CD4-positive, alpha-beta T cell (primary cell): ENCODE measurements at regions of chr11 and their contacts with region 1.

Region 1: DNA sequence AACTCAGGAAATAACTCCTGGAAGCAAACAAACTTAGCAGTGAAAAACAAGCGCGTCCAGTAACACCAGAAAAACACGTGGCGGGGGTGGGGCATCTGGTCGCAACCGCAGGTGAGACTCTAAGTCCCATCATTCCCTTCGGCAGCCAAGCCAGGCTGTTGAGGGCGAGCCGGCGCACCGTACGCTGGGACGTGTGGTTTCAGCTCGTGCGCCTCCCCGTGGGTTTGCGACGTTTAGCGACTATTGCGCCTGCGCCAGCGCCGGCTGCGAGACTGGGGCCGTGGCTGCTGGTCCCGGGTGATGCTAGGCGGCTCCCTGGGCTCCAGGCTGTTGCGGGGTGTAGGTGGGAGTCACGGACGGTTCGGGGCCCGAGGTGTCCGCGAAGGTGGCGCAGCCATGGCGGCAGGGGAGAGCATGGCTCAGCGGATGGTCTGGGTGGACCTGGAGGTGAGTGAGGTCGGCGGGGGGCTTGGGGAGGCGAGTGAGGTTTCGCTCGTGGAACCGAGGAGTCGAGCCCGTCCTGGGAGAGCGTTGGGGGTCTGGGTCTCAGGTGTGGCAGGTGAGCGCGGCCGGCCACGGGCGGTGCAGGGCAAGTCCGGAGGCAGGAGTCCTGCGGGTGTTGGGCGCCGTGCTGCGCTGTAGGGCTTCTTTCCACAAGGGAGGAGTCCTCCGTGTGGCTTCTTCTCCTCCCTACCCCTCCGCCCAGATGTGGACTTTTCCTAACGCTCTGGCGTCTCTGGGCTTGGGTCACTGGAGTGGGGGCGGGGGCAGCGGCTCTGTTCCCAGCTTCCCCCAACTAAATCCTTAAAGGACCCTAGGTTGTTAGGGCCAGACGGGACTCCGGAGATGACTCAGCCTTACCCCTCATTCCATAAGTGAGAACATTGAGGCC is at the start of gene REXO2:
- DNase-seq: peak; percentile 89 to 98 (median 93)
- ATAC-seq: peak; percentile 99
- H3K4me3 ChIP-seq: peak within 1 kb of the TSS; percentile 100
- H3K4me3 Mint-ChIP-seq: peak within 1 kb of the TSS; percentile 98
- H3K27ac ChIP-seq: peak within 1 kb of the TSS; percentile 35 to 49
- H3K27ac Mint-ChIP-seq: peak within 1 kb of the TSS; percentile 89
- H3K4me1 ChIP-seq: peaks cover 16% of the 10 kb centered on the region
- H3K4me1 Mint-ChIP-seq: peaks cover 36% of the 10 kb centered on the region
- H3K27me3 ChIP-seq: no peaks in the 10 kb centered on the region
- H3K27me3 Mint-ChIP-seq: no peaks in the 10 kb centered on the region
- CTCF ChIP-seq: peak; percentile 16
- total RNA-seq, gene REXO2: 17.3 to 20.6 TPM

Region 2: DNA sequence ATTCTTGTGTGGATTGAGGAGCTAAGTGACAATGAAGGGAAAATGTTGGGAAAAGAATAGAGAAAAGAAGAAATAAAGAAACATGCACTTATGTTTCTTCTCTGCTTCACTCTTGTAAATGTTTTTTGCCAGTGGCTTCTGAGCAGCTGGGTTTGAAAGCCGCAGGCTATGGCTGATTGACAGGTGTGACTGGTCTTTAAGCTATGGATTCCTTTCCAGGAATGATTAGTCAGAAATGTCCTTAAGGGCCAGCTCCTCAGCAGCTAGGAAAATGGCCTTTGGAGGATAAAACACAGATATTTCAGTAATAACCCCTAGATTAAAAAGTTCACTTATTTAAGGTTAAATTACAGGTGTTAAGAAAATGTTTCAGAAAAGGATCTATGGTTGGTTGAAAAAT is 557.6 kb before region 1 on chr11:
- CTCF ChIA-PET with region 1: no interaction called
- POLR2A ChIA-PET with region 1: no interaction called
- intact Hi-C with region 1: loop called in 1 of 2 experiments (anchors 2 kb)
- DNase-seq: no peak
- ATAC-seq: no peak
- H3K4me3 ChIP-seq: no peak overlapping the region
- H3K4me3 Mint-ChIP-seq: no peak overlapping the region
- H3K27ac ChIP-seq: no peak overlapping the region
- H3K27ac Mint-ChIP-seq: no peak overlapping the region
- H3K4me1 ChIP-seq: peaks cover 2% of the 10 kb centered on the region
- H3K4me1 Mint-ChIP-seq: peaks cover 10% of the 10 kb centered on the region
- H3K27me3 ChIP-seq: no peaks in the 10 kb centered on the region
- H3K27me3 Mint-ChIP-seq: no peaks in the 10 kb centered on the region
- CTCF ChIP-seq: no peak

Region 3: DNA sequence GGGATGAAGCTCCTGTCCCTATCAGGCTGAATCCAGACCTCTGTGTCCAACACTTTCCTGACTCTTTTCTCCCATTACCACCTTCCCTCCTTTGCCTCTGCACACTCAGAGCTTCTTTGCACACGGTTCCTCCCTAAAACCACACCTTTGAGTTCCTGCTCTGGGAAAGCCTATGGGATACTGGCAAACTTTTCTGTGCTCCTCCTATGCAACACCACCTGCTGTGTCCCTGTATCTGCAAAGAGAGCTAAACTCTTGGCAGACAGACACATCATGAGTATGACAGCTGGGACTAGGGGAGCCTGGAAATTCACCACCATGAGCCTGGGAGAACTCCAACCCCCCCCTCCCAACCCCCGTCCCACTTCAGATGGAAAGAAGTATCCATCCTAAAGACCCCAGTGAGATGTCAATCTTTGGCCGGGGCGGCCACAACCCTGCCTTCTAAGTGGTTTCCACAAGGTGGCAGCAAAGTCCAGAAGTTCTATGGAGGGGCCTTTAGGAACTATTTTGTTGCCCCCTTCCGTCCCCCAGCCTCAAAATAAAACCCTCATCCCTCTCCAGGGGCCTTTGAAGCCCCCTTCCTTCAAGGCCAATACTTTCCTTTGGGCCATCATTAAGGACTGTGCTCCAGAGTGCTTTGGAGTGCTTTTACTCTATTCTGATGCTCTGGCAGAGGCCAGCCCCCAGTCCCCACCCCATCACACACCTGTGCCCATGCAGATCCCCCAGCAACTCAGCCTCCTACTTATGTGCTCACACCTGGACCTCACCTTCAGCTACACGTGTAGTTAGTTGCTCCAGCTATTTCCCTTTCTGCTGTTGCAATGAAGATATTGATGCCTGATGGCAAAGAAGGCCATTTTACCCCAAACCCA is 445.2 kb before region 1 on chr11:
- CTCF ChIA-PET with region 1: no interaction called
- POLR2A ChIA-PET with region 1: no interaction called
- intact Hi-C with region 1: no loop called
- DNase-seq: peak; percentile 8 to 61 (median 28)
- ATAC-seq: no peak
- H3K4me3 ChIP-seq: no peak overlapping the region
- H3K4me3 Mint-ChIP-seq: no peak overlapping the region
- H3K27ac ChIP-seq: no peak overlapping the region
- H3K27ac Mint-ChIP-seq: no peak overlapping the region
- H3K4me1 ChIP-seq: peaks cover 8% of the 10 kb centered on the region
- H3K4me1 Mint-ChIP-seq: no peaks in the 10 kb centered on the region
- H3K27me3 ChIP-seq: peaks cover 8 to 11% of the 10 kb centered on the region in 2 experiments
- H3K27me3 Mint-ChIP-seq: peaks cover 35% of the 10 kb centered on the region
- CTCF ChIP-seq: peak; percentile 77

Region 4: GRCh38 chr11:114449845-114450244 is 10.4 kb after region 1 on chr11:
- CTCF ChIA-PET with region 1: no interaction called
- POLR2A ChIA-PET with region 1: no interaction called
- intact Hi-C with region 1: no loop called
- DNase-seq: no peak
- ATAC-seq: no peak
- H3K4me3 ChIP-seq: no peak overlapping the region
- H3K4me3 Mint-ChIP-seq: no peak overlapping the region
- H3K27ac ChIP-seq: peak overlapping the region in 1 of 2 donors; percentile 56
- H3K27ac Mint-ChIP-seq: no peak overlapping the region
- H3K4me1 ChIP-seq: no peaks in the 10 kb centered on the region
- H3K4me1 Mint-ChIP-seq: no peaks in the 10 kb centered on the region
- H3K27me3 ChIP-seq: no peaks in the 10 kb centered on the region
- H3K27me3 Mint-ChIP-seq: no peaks in the 10 kb centered on the region
- CTCF ChIP-seq: no peak